Activated T-helper 1 cell treated with anti-CD3 and anti-CD28 coated beads, Interleukin-12 subunit alpha, Interleukin-12 subunit beta, Interleukin-2, Interleukin-4 antibody, amounts not matched to agents 30 ng/mL and 10 ng/mL and 1 ng/mL, durations not matched to agents 14 hours and 24 hours and 36 hours (primary cell): ENCODE measurements at regions of chr4 and their contacts with region 1.

Region 1: GRCh38 chr4:13548984-13549546 is 4.8 kb upstream of the NKX3-2 start:
- DNase-seq: peak; percentile 72
- H3K4me3 Mint-ChIP-seq: peak overlapping the region; percentile 28
- H3K27ac Mint-ChIP-seq: peak overlapping the region; percentile 25
- H3K4me1 Mint-ChIP-seq: peaks cover 29% of the 10 kb centered on the region
- H3K27me3 Mint-ChIP-seq: peaks cover 61% of the 10 kb centered on the region

Region 2: DNA sequence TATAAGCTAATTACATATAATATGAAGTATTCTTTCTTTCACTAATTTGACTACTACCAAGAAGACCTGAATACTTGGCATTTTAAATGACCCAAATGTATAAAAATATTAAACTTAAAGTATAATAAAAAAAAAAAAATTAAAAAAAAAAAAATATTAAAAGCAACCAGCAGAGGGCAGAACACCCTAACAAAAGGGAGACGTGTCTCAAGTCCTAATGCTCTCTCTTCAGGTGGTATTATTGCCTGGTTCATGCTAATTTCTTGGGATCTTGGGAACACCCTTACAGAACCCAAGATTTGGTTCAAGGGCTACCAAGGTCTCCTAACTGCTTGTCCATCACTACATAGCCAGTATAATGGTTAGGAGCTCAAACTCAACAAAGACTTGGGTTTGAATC is 819.7 kb before region 1 on chr4:
- intact Hi-C with region 1: loop called (anchors 1 kb)
- DNase-seq: no peak
- H3K4me3 Mint-ChIP-seq: no peak overlapping the region
- H3K27ac Mint-ChIP-seq: no peak overlapping the region
- H3K4me1 Mint-ChIP-seq: no peaks in the 10 kb centered on the region
- H3K27me3 Mint-ChIP-seq: no peaks in the 10 kb centered on the region

Region 3: DNA sequence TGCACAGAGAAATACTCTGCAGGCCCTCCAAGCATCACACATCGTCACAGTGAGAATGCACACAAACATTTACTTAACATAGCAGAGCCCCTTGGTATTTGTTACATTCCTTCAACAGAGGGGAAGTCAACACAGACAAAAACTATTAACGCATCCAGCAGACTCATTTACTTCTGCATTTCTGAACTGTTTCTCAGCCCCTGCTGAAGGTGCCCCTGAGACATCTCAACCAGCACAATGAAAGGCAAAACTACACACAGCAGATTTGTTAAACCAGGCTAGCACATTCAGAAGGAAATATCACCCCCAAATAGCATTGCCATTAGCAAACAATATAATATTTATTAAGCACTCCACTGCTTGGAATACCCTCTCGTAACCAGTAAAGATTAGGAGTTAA is 431.9 kb before region 1 on chr4:
- intact Hi-C with region 1: loop called (anchors 10 kb)
- DNase-seq: no peak
- H3K4me3 Mint-ChIP-seq: no peak overlapping the region
- H3K27ac Mint-ChIP-seq: no peak overlapping the region
- H3K4me1 Mint-ChIP-seq: no peaks in the 10 kb centered on the region
- H3K27me3 Mint-ChIP-seq: no peaks in the 10 kb centered on the region

Region 4: GRCh38 chr4:13349096-13349495 is 200.0 kb before region 1 on chr4:
- intact Hi-C with region 1: no loop called
- DNase-seq: no peak
- H3K4me3 Mint-ChIP-seq: no peak overlapping the region
- H3K27ac Mint-ChIP-seq: no peak overlapping the region
- H3K4me1 Mint-ChIP-seq: no peaks in the 10 kb centered on the region
- H3K27me3 Mint-ChIP-seq: no peaks in the 10 kb centered on the region

Region 5: GRCh38 chr4:13522282-13523104 is 26.6 kb before region 1 on chr4:
- intact Hi-C with region 1: loop called (anchors 1 kb)
- DNase-seq: no peak
- H3K4me3 Mint-ChIP-seq: no peak overlapping the region
- H3K27ac Mint-ChIP-seq: no peak overlapping the region
- H3K4me1 Mint-ChIP-seq: no peaks in the 10 kb centered on the region
- H3K27me3 Mint-ChIP-seq: peaks cover 69% of the 10 kb centered on the region

Region 6: DNA sequence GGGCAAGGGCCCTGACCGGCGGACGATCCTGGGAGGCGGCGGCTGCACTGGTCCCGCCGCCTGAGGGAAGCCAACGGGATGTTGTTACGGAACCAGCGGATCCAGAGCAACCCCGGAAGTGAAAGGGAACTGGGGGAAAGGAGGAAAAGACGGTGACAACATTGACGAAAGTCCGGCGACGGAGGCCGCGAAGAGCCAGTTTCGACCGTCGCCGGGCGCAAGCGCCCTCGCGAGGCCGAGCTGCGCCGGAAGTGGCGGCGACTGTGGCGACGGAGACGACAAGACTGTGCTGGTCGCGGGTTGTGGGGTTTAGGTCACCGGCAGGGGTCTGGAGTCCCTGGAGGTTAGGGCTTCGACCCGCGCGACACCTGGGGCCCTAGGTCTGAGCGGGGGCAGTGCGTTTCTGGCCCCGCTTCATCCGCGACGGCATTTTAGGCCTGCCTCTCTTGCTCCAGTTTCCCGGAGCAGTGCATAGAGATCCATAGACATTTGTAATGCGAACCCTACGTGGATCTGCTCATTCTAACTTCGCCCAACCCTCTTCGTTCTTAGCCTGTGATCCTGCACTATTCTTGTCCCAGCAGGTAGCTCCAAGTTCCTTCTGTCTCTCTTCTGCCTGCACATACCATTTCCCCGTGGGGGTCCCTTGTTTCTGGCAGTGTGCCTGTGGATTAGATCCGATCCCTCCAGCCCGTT is 78.7 kb after region 1 on chr4 and contains the start of gene BOD1L1:
- intact Hi-C with region 1: loop called (anchors 2 kb)
- DNase-seq: peak; percentile 81
- H3K4me3 Mint-ChIP-seq: peak within 1 kb of the TSS; percentile 99
- H3K27ac Mint-ChIP-seq: peak within 1 kb of the TSS; percentile 98
- H3K4me1 Mint-ChIP-seq: peaks cover 29% of the 10 kb centered on the region
- H3K27me3 Mint-ChIP-seq: peaks cover 4% of the 10 kb centered on the region
- total RNA-seq, gene BOD1L1: 40.1 and 40.4 TPM in 2 replicates